IMR-90 (cell line): ENCODE measurements at regions of chr4 and their contacts with region 1.

Region 1: DNA sequence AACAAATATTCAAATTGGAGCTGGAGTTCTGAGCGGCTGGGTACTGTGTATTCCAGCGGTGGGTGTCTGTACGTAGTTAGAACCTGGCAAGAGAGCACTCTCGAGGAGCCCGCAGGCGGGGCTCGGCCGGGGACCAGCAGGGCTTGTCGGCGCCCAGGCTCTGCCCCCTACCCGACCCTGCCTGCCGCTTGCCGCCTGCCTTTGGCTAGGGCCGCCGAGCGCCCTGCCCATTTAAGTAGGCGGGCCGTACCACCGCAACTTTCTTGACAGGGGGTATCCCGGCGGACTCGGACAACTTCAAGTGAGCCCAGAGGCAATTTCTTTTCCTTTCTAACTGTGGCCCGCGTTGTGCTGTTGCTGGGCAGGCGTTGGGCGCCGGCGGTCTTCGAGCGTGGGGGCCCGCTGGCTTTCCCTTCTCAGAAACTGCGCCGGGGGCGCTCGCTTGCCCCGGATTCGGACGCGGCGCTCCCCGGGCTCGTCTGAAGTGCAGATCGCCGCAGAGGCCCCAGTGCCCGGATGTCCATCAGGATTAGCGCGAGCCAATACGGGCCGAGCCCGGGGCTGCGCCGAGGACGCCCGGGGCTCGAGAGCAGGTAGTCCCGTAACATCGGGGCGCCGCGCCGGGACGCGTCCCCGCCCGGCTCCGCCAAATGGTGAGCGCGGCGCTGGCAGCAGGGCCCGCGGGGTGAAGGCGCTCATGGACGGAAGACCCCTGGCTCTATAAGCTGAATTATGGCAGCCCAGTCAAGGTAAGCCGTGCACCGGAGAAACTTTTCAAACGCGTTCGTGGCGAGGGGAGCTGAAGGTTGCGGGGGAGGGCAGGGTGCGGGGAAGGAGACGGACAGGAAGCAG is 72.1 kb downstream of the AFF1 start:
- DNase-seq: peak; percentile 92
- ATAC-seq: peak; percentile 91
- H3K4me3 ChIP-seq: peak overlapping the region; percentile 83
- H3K27ac ChIP-seq: peak overlapping the region; percentile 93
- H3K4me1 ChIP-seq: peaks cover 4% of the 10 kb centered on the region; the same call in 1 of the 2 replicates
- H3K27me3 ChIP-seq: no peaks in the 10 kb centered on the region
- CTCF ChIP-seq: peak; percentile 15; the same call in 1 of the 2 replicates
- POLR2A ChIP-seq: peak; percentile 99
- RAD21 ChIP-seq: no peak; the same call in 1 of the 2 replicates

Region 2: GRCh38 chr4:86921608-86922252 is 85.2 kb before region 1 on chr4:
- CTCF ChIA-PET with region 1: interaction called, 18 read pairs
- POLR2A ChIA-PET with region 1: interaction called, 3 read pairs
- dilution Hi-C with region 1: no loop called
- in situ Hi-C with region 1: no loop called
- intact Hi-C with region 1: loop called (anchors 1 kb)
- DNase-seq: no peak
- ATAC-seq: no peak
- H3K4me3 ChIP-seq: no peak overlapping the region
- H3K27ac ChIP-seq: no peak overlapping the region
- H3K4me1 ChIP-seq: peaks cover 4% of the 10 kb centered on the region; the same call in 1 of the 2 replicates
- H3K27me3 ChIP-seq: no peaks in the 10 kb centered on the region
- CTCF ChIP-seq: no peak
- POLR2A ChIP-seq: no peak
- RAD21 ChIP-seq: no peak

Region 3: DNA sequence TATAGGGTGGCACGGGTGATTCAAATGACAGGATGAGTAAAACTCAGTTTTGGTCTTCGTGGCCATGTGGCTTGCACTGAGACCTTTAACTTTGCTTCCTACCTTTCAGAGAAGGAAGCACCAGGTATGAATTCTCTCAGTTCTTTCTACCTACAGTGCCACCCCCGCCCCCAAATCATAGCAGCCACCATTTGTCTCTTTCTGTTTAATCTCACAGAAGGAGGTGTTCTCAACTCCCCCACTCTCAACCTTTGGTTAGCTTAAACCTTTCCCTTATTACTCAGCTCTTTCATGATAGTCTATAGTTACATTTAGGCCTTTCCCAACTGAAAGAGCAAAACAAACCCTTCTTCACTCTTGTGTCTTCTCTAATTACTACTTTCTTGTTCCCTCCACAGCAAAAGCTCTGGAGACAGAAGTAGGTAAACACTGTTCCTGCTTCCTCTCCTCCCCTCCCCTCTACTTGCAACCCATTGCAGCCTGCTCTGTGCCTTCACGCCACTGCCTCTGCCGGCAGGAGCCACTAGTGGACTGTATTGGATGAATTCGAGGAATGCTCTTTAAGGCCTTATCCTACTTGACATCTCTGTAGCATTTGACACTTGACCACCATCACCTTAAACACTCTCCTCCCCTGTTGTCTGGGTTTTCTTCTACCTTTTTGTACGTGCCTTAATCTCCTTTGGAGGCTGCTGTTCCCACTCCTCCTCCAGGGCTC is 51.6 kb after region 1 on chr4:
- CTCF ChIA-PET with region 1: no interaction called
- POLR2A ChIA-PET with region 1: no interaction called
- dilution Hi-C with region 1: no loop called
- in situ Hi-C with region 1: no loop called
- intact Hi-C with region 1: loop called (anchors 5 kb)
- DNase-seq: no peak
- ATAC-seq: peak; percentile 16; the same call in 1 of the 2 replicates
- H3K4me3 ChIP-seq: no peak overlapping the region
- H3K27ac ChIP-seq: peak overlapping the region; percentile 10; the same call in 1 of the 2 replicates
- H3K4me1 ChIP-seq: peaks cover 14% of the 10 kb centered on the region
- H3K27me3 ChIP-seq: no peaks in the 10 kb centered on the region
- CTCF ChIP-seq: 0 out of 2 replicates have a peak, but pooled peaks have one; percentile 17
- POLR2A ChIP-seq: no peak
- RAD21 ChIP-seq: no peak

Region 4: DNA sequence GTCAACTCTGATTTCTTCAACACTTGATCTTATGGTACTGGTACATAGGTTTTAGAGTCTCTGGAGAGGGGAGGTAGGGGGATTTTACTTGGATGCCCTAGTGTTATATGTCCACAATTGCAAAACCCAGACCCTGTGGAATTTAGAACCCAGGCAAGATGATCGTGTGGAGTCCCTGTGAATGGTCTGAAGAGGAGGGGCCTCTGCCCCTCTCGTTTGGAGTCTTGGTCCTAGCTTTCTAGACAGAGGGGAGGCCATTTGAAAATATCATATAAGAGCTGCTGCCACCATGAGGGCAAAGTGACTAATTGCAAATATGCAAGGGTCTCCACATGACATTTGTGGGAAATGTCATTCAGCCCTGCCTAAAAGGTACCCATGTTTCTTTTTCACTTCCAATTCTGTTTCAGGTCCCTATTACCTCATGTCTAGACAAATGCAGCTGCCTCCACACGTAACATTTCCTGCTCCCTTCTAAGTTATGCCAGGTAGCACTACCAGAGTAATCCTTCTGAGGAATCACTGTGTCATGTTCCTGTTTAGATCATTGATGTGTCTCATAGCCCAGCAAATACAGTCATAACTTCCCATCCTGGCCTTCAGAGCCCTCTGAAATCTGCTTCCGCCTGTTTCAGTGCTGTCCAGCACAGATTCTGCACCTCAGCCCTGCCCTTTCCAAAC is 86.7 kb after region 1 on chr4:
- CTCF ChIA-PET with region 1: interaction called, 3 read pairs
- POLR2A ChIA-PET with region 1: no interaction called
- dilution Hi-C with region 1: no loop called
- in situ Hi-C with region 1: loop called (anchors 5 kb)
- intact Hi-C with region 1: loop called (anchors 2 kb)
- DNase-seq: peak; percentile 72
- ATAC-seq: peak; percentile 83
- H3K4me3 ChIP-seq: no peak overlapping the region
- H3K27ac ChIP-seq: no peak overlapping the region
- H3K4me1 ChIP-seq: peaks cover 2% of the 10 kb centered on the region; the same call in 1 of the 2 replicates
- H3K27me3 ChIP-seq: no peaks in the 10 kb centered on the region
- CTCF ChIP-seq: peak; percentile 56
- POLR2A ChIP-seq: no peak
- RAD21 ChIP-seq: peak; percentile 61

Region 5: GRCh38 chr4:88012647-88013046 is 1005.7 kb after region 1 on chr4:
- CTCF ChIA-PET with region 1: no interaction called
- POLR2A ChIA-PET with region 1: no interaction called
- dilution Hi-C with region 1: no loop called
- in situ Hi-C with region 1: no loop called
- intact Hi-C with region 1: loop called (anchors 5 kb)
- DNase-seq: no peak
- ATAC-seq: no peak
- H3K4me3 ChIP-seq: no peak overlapping the region
- H3K27ac ChIP-seq: no peak overlapping the region
- H3K4me1 ChIP-seq: peaks cover 18% of the 10 kb centered on the region
- H3K27me3 ChIP-seq: no peaks in the 10 kb centered on the region
- CTCF ChIP-seq: no peak
- POLR2A ChIP-seq: no peak
- RAD21 ChIP-seq: no peak